Transverse colon (tissue), 4 donors: ENCODE measurements at regions of chr10 and their contacts with region 1.

Region 1: DNA sequence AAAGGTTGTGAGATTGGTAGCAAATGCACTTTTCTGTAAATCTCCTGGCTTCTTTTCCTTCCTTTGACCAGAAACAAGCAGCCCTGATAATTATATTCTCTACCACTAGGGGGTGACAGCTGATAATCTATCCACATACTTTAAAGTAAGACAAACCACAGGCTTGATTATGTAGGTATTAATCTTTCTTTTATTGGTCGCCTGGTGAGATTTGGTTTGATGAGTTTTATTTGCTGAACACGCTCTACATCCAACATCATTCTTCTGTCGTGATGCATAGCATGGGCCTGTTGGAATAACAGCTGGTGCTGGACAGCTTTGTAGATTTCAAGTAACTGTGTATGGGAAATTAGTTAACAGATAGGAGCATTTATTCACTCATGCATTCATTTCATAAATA is 63.5 kb downstream of the ZNF365 start:
- DNase-seq: no peak
- H3K4me3 ChIP-seq: no peak overlapping the region
- H3K27ac ChIP-seq: no peak overlapping the region
- H3K4me1 ChIP-seq: peaks cover 0 to 5% (median 0%) of the 10 kb centered on the region in 4 donors
- H3K27me3 ChIP-seq: no peaks in the 10 kb centered on the region
- CTCF ChIP-seq: peak; percentile 73 to 83 (median 80)
- EP300 ChIP-seq: no peak
- POLR2A ChIP-seq: no peak

Region 2: DNA sequence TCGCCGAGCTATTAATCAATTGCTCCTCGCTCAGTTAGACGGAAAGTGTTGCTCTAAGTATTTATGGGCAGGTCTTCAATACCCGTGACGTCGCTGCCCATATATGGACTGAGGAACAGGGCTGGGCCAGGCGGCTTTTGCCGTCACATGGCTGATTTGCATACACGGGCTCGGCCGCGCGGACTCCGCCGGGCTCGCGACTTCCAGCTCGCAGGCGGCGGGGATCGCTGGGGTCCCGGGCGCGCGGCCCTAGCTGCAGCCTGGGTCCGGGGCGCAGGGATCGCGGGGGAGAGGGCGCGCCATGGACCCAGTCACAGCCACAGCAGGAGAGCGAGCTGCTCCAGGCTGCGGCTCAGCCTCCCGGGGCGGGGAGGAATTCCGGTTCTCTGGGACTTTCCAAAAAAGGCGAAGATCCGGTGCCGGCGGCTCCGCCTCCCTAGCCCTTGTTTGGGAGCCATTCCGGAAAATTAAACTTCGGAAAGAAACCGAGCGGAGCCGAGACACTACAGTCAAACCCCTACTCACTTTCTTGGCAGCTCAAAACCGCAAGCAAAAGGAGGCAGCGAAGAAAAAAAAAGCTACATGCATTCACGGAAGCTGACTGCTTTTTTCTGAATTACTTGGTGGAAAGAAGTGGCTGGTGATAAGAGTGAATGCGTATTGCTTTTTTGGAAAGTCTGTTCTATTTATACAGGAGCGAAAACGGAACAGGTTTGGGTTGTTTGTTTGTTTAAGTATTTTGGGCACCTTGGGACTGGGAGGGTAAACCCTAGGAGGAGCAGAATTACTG is 378.8 kb after region 1 on chr10 and contains the start of gene EGR2:
- in situ Hi-C with region 1: no loop called
- intact Hi-C with region 1: loop called (anchors 5 kb)
- DNase-seq: peak; percentile 94
- H3K4me3 ChIP-seq: peak within 1 kb of the TSS; percentile 77 to 87 (median 80)
- H3K27ac ChIP-seq: peak within 1 kb of the TSS; percentile 82 to 94 (median 90)
- H3K4me1 ChIP-seq: peaks cover 8 to 35% (median 31%) of the 10 kb centered on the region in 4 donors
- H3K27me3 ChIP-seq: peaks cover 56% of the 10 kb centered on the region
- CTCF ChIP-seq: no peak
- EP300 ChIP-seq: no peak
- POLR2A ChIP-seq: no peak
- total RNA-seq, gene EGR2: 0.82 to 1.3 TPM in 2 of 4 donors, not detected in the others

Region 3: DNA sequence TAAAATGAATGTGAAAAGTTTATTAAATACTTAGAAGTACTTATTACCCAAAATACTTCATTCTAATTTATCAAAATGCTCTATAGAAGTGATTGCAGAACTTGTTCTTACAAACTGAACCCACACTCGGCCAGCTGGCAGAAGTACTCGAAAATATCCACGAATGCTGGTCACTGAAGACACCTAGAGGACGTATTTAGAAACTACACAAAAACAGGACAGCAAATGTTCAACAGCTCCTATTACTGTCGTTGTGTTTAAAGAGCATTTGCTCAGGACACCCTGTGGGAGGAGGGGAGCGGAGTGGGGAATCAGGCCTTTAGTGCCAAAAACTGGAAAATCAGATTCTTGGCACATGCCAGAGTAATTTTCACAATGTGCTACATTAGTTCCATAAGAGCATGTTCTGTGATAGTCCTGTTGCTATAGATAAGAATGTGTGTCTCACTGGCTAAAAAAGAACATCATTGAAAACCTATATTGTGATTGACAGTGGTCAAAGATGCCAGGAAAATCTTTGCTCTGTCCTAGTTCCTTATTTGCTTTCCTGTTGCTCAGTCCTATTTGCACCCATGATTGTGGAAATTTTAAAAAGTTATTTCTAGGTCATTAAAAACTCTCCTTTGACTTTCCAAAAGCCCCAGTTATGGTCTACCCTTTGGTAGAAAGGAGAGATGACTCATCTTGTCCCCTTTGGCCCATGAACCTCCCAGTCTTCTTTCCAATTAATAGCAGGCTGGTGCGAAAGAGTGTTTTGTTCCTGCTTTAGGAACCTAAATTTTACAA is 646.4 kb after region 1 on chr10:
- in situ Hi-C with region 1: loop called in 2 of 4 experiments (anchors 25 kb)
- intact Hi-C with region 1: no loop called
- DNase-seq: peak; percentile 51
- H3K4me3 ChIP-seq: no peak overlapping the region
- H3K27ac ChIP-seq: peak overlapping the region in 1 of 4 donors; percentile 18
- H3K4me1 ChIP-seq: no peaks in the 10 kb centered on the region
- H3K27me3 ChIP-seq: no peaks in the 10 kb centered on the region
- CTCF ChIP-seq: peak; percentile 62 to 73 (median 67)
- EP300 ChIP-seq: no peak
- POLR2A ChIP-seq: no peak

Region 4: DNA sequence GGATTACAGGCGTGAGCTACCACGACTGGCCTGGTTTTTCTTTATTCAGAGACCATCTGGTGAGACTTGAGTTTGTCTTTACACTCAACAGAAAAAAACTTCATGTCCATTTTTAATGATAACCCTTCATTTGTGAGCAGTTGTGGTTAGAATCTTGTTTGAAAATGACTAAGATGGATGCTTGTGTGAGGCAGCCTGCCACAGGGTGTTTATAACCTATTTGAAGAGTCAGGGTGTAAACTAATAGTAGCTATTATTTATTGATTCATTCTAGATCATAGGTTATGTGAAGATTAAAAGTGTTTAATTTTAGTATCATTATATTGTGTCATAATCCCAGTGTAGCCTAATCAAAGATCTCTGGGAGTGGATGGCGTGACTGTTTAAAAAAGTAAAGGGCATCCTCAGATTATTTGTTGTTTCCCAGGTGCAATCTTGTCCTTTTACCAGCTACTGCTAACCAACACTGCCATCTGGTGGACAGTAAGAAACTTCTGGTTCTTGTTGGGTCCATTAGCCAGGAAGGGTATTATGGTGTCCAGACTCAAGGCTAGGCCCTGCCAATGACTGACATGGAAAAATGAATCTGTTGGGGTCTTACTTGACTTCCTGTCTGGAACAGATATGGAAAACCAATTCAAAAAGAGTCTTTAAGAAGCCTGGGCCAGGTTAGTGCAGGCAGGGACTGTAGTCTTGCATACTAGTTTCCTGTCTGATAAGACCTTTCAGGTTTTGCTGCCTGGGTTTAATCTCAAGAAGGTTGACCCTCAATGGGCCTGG is 720.3 kb after region 1 on chr10:
- in situ Hi-C with region 1: no loop called
- intact Hi-C with region 1: loop called (anchors 5 kb)
- DNase-seq: no peak
- H3K4me3 ChIP-seq: no peak overlapping the region
- H3K27ac ChIP-seq: no peak overlapping the region
- H3K4me1 ChIP-seq: peaks cover 16 to 30% (median 18%) of the 10 kb centered on the region in 4 donors
- H3K27me3 ChIP-seq: no peaks in the 10 kb centered on the region
- CTCF ChIP-seq: peak; percentile 74 to 83 (median 79)
- EP300 ChIP-seq: no peak
- POLR2A ChIP-seq: no peak